ENCODE measurements at regions of chr12 and their contacts with region 1.

Region 1: GRCh38 chr12:54993161-54993835 is 8.7 kb upstream of the TESPA1 start:
- DNase-seq: peak; percentile 63 to 75
- ATAC-seq: peak; percentile 89 to 97
- H3K4me3 ChIP-seq: no peak overlapping the region
- H3K27ac ChIP-seq: no peak overlapping the region
- H3K4me1 ChIP-seq: no peaks in the 10 kb centered on the region
- CTCF ChIP-seq: peak; percentile 90
- EP300 ChIP-seq: no peak
- POLR2A ChIP-seq: no peak
- RAD21 ChIP-seq: peak; percentile 86 to 91

Region 2: GRCh38 chr12:54795644-54796043 is 197.7 kb before region 1 on chr12:
- CTCF ChIA-PET with region 1: no interaction called
- POLR2A ChIA-PET with region 1: no interaction called
- DNase-seq: no peak
- ATAC-seq: no peak
- H3K4me3 ChIP-seq: no peak overlapping the region
- H3K27ac ChIP-seq: no peak overlapping the region
- H3K4me1 ChIP-seq: no peaks in the 10 kb centered on the region
- CTCF ChIP-seq: no peak
- EP300 ChIP-seq: no peak
- POLR2A ChIP-seq: no peak
- RAD21 ChIP-seq: no peak

Region 3: DNA sequence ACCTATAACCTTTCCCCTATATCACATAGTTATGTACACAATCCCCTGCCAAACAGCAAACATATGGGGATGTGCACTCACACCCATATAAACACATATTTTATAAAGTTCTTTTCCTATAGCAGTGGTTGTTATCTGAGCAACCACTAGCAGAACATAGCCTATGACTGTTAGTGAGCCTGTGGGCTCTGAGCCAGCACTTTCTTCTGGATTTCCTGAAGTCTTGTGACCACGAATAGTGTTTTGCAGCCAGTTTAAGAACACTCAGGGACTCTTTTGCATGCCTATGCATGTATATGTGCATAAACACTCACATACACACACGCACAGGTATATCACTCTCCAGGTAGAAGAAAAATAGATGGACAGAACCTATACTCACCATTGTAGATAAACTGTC is 25.8 kb before region 1 on chr12:
- CTCF ChIA-PET with region 1: interaction called, 14 read pairs
- POLR2A ChIA-PET with region 1: no interaction called
- DNase-seq: no peak
- ATAC-seq: no peak
- H3K4me3 ChIP-seq: no peak overlapping the region
- H3K27ac ChIP-seq: no peak overlapping the region
- H3K4me1 ChIP-seq: no peaks in the 10 kb centered on the region
- CTCF ChIP-seq: no peak
- EP300 ChIP-seq: no peak
- POLR2A ChIP-seq: no peak
- RAD21 ChIP-seq: no peak

Region 4: GRCh38 chr12:54975272-54975671 is 18.0 kb before region 1 on chr12:
- CTCF ChIA-PET with region 1: interaction called, 18 read pairs
- POLR2A ChIA-PET with region 1: no interaction called
- DNase-seq: no peak
- ATAC-seq: no peak
- H3K4me3 ChIP-seq: no peak overlapping the region
- H3K27ac ChIP-seq: no peak overlapping the region
- H3K4me1 ChIP-seq: no peaks in the 10 kb centered on the region
- CTCF ChIP-seq: no peak
- EP300 ChIP-seq: no peak
- POLR2A ChIP-seq: no peak
- RAD21 ChIP-seq: no peak

Region 5: DNA sequence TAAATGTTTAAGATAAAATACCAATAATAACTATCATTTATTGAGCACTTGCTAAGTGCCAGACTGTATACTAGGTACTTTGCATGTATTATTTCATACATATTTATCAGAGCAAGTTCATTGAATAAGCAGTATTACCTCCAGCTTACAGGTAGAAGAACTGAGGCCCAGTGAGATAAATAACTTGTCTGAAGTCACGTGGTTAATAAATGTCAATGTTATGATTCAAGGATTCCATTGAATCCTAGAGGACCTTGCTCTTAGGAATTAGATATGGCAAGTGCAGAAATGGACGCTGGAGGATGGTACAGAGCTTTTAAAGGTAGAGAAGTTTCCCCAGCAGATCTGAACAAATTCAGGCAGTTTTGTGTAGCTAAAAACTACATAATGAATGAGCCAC is 22.6 kb after region 1 on chr12:
- CTCF ChIA-PET with region 1: interaction called, 14 read pairs
- POLR2A ChIA-PET with region 1: no interaction called
- DNase-seq: no peak
- ATAC-seq: no peak
- H3K4me3 ChIP-seq: no peak overlapping the region
- H3K27ac ChIP-seq: no peak overlapping the region
- H3K4me1 ChIP-seq: no peaks in the 10 kb centered on the region
- CTCF ChIP-seq: no peak
- EP300 ChIP-seq: no peak
- POLR2A ChIP-seq: no peak
- RAD21 ChIP-seq: no peak

Region 6: DNA sequence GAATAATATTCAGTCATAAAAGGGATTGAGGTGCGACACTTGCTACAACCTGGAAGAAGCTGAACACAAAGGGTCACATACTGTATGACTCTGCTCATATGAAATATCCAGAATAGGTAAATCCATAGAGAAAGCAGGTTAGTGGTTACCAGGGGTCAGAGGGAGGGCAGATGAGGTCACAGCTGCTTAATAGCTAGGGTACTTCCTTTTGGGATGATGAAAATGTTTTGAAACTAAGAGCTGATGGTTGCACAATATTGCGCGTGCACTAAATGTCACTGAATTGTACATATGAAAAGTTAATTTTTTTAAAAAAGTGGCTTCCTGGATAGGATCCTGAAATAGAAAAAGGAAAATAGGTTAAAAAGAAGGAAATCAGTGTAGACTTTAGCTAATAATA is 50.2 kb after region 1 on chr12:
- CTCF ChIA-PET with region 1: interaction called, 17 read pairs
- POLR2A ChIA-PET with region 1: no interaction called
- DNase-seq: no peak
- ATAC-seq: no peak
- H3K4me3 ChIP-seq: no peak overlapping the region
- H3K27ac ChIP-seq: no peak overlapping the region
- H3K4me1 ChIP-seq: no peaks in the 10 kb centered on the region
- CTCF ChIP-seq: no peak
- EP300 ChIP-seq: no peak
- POLR2A ChIP-seq: no peak
- RAD21 ChIP-seq: no peak